ENCODE measurements at regions of chr3 and their contacts with region 1.

Region 1: GRCh38 chr3:46923559-46924350 is 46.2 kb downstream of the PTH1R start:
- DNase-seq: peak; percentile 65
- ATAC-seq: peak; percentile 55
- H3K4me3 Mint-ChIP-seq: no peak overlapping the region
- H3K27ac Mint-ChIP-seq: no peak overlapping the region
- H3K4me1 Mint-ChIP-seq: peaks cover 20% of the 10 kb centered on the region
- H3K27me3 Mint-ChIP-seq: no peaks in the 10 kb centered on the region

Region 2: GRCh38 chr3:46549408-46549904 is 374.3 kb before region 1 on chr3:
- CTCF ChIA-PET with region 1: no interaction called
- POLR2A ChIA-PET with region 1: no interaction called
- intact Hi-C with region 1: no loop called
- DNase-seq: no peak
- ATAC-seq: no peak
- H3K4me3 Mint-ChIP-seq: no peak overlapping the region
- H3K27ac Mint-ChIP-seq: no peak overlapping the region
- H3K4me1 Mint-ChIP-seq: peaks cover 13% of the 10 kb centered on the region
- H3K27me3 Mint-ChIP-seq: no peaks in the 10 kb centered on the region

Region 3: GRCh38 chr3:46909535-46910442 is 14.0 kb before region 1 on chr3:
- CTCF ChIA-PET with region 1: interaction called, 10 read pairs
- POLR2A ChIA-PET with region 1: no interaction called
- intact Hi-C with region 1: no loop called
- DNase-seq: peak; percentile 91
- ATAC-seq: peak; percentile 96
- H3K4me3 Mint-ChIP-seq: no peak overlapping the region
- H3K27ac Mint-ChIP-seq: no peak overlapping the region
- H3K4me1 Mint-ChIP-seq: peaks cover 18% of the 10 kb centered on the region
- H3K27me3 Mint-ChIP-seq: no peaks in the 10 kb centered on the region

Region 4: GRCh38 chr3:46998121-46998851 is 74.5 kb after region 1 on chr3:
- CTCF ChIA-PET with region 1: interaction called, 7 read pairs
- POLR2A ChIA-PET with region 1: interaction called, 3 read pairs
- intact Hi-C with region 1: loop called (anchors 1 to 2 kb)
- DNase-seq: peak; percentile 88
- ATAC-seq: peak; percentile 84
- H3K4me3 Mint-ChIP-seq: no peak overlapping the region
- H3K27ac Mint-ChIP-seq: no peak overlapping the region
- H3K4me1 Mint-ChIP-seq: peaks cover 9% of the 10 kb centered on the region
- H3K27me3 Mint-ChIP-seq: no peaks in the 10 kb centered on the region

Region 5: DNA sequence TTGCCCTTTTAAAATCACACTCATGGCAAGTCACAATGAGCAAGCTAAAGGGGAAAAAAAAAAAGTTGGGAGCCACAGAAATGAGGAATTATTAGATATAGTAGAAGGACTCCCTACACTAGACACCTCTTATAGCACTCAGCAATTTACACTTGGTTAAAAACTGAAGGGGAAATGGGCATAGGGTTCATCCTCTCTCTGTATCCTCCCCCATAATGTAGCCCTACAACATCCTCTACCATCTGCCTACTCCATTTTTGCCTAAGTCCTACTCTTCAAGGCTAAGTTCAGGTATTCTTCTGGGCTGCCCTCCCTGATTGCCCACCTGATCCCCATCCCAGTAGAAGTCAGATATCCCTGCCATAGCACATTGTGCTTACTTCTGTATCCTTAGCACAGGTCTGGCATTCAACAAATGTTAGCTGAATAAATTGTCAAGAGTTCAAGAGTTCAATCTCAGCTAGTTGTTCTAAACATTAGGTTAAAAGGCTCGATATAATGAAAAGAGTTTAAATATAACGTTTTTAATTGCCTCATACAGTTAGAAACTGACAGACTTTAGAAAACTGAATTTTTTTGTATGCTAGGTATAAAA is 225.7 kb after region 1 on chr3:
- CTCF ChIA-PET with region 1: no interaction called
- POLR2A ChIA-PET with region 1: no interaction called
- intact Hi-C with region 1: loop called in 1 of 2 experiments (anchors 10 kb)
- DNase-seq: no peak
- ATAC-seq: no peak
- H3K4me3 Mint-ChIP-seq: no peak overlapping the region
- H3K27ac Mint-ChIP-seq: no peak overlapping the region
- H3K4me1 Mint-ChIP-seq: peaks cover 44% of the 10 kb centered on the region
- H3K27me3 Mint-ChIP-seq: no peaks in the 10 kb centered on the region

Region 6: DNA sequence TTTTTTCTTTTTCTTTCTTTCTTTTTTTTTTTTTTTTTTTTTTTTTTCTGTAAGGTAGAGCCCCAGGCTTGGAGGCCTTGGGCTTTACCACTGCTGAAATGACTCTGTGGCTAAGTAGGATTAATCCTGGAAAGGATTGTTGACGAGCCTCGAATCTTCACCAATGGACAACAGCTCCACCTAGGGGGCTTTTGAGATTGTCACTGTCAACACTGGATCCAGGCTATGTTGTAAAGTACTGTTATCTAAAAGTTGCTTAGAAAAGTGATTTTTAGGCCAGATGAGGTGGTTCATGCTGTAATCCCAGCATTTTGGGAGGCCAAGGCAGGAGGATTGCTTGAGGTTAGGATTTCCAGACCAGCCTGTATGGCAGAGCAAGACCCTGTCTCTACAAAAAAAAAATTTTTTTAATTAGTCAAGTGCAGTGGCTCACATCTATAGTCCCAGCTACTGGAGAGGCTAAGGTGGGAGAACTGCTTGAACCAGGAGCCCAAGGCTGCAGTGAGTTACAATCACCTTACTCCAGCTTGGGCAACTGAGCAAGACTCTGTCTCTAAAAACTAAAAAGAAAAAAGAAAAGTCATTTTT is 400.6 kb after region 1 on chr3:
- CTCF ChIA-PET with region 1: interaction called, 4 read pairs
- POLR2A ChIA-PET with region 1: no interaction called
- intact Hi-C with region 1: loop called in 1 of 2 experiments (anchors 2 kb)
- DNase-seq: peak; percentile 66
- ATAC-seq: peak; percentile 88
- H3K4me3 Mint-ChIP-seq: no peak overlapping the region
- H3K27ac Mint-ChIP-seq: no peak overlapping the region
- H3K4me1 Mint-ChIP-seq: no peaks in the 10 kb centered on the region
- H3K27me3 Mint-ChIP-seq: no peaks in the 10 kb centered on the region